ENCODE measurements at regions of chr1 and their contacts with region 1.

Region 1: GRCh38 chr1:28926629-28927265 is 12.4 kb downstream of the EPB41 start:
- DNase-seq: peak; percentile 49
- H3K4me3 Mint-ChIP-seq: peak overlapping the region; percentile 52
- H3K27ac Mint-ChIP-seq: peak overlapping the region; percentile 77
- H3K4me1 Mint-ChIP-seq: peaks cover 38% of the 10 kb centered on the region
- H3K27me3 Mint-ChIP-seq: no peaks in the 10 kb centered on the region

Region 2: GRCh38 chr1:28581536-28582247 is 345.1 kb before region 1 on chr1:
- intact Hi-C with region 1: no loop called
- DNase-seq: peak; percentile 95
- H3K4me3 Mint-ChIP-seq: peak overlapping the region; percentile 96
- H3K27ac Mint-ChIP-seq: peak overlapping the region; percentile 94
- H3K4me1 Mint-ChIP-seq: peaks cover 21% of the 10 kb centered on the region
- H3K27me3 Mint-ChIP-seq: no peaks in the 10 kb centered on the region

Region 3: DNA sequence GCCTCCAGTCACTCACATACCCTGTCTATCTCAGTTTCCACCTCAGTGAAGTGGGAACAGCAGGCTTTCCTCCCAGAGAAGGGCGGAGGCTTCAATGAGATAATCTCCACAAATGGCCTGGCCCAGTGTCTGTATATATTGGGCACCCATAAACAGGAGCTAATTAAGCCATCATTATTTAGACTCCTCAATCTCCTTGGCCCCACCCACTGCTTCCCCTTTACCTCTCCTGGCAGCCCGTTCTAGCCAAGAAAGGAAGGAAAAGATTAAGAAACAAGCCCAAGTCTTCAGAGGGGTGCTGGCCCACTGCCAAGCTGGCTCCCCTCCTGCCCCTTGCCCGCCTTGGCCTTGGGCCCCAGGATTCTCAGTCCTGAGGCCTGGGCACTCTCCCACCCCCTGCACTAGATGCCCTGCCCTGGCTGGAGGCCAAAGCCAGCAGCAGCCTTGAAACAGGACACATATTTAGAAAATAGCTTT is 28.3 kb before region 1 on chr1:
- intact Hi-C with region 1: no loop called
- DNase-seq: no peak
- H3K4me3 Mint-ChIP-seq: no peak overlapping the region
- H3K27ac Mint-ChIP-seq: peak overlapping the region; percentile 23
- H3K4me1 Mint-ChIP-seq: peaks cover 8% of the 10 kb centered on the region
- H3K27me3 Mint-ChIP-seq: no peaks in the 10 kb centered on the region

Region 4: DNA sequence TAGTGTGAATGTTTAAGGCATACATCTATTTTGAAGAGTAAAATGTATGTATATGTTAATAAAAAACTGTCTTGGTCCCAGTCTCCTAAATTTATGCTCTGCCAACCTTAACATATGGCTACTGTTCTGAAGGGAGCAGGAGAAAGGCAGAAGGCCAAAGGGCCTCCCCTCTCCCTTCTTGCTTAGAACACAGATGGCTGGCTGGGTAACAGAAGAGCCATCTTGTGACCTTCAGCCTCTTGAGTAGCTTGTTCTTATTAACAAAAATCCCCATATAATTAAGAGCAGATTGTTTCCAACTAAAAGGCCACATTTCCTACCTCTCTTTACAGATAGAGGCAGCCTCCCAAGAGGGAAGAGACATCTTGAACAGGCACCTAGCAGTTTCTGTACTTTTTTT is 23.7 kb after region 1 on chr1:
- intact Hi-C with region 1: no loop called
- DNase-seq: no peak
- H3K4me3 Mint-ChIP-seq: no peak overlapping the region
- H3K27ac Mint-ChIP-seq: no peak overlapping the region
- H3K4me1 Mint-ChIP-seq: peaks cover 3% of the 10 kb centered on the region
- H3K27me3 Mint-ChIP-seq: no peaks in the 10 kb centered on the region

Region 5: GRCh38 chr1:28965271-28965870 is 38.6 kb after region 1 on chr1:
- intact Hi-C with region 1: loop called (anchors 1 kb)
- DNase-seq: no peak
- H3K4me3 Mint-ChIP-seq: no peak overlapping the region
- H3K27ac Mint-ChIP-seq: no peak overlapping the region
- H3K4me1 Mint-ChIP-seq: peaks cover 34% of the 10 kb centered on the region
- H3K27me3 Mint-ChIP-seq: no peaks in the 10 kb centered on the region

Region 6: GRCh38 chr1:28971980-28972771 is 45.4 kb after region 1 on chr1:
- intact Hi-C with region 1: loop called (anchors 2 kb)
- DNase-seq: no peak
- H3K4me3 Mint-ChIP-seq: peak overlapping the region; percentile 15
- H3K27ac Mint-ChIP-seq: peak overlapping the region; percentile 78
- H3K4me1 Mint-ChIP-seq: peaks cover 28% of the 10 kb centered on the region
- H3K27me3 Mint-ChIP-seq: no peaks in the 10 kb centered on the region